ENCODE measurements at regions of chr6 and their contacts with region 1.

Region 1: DNA sequence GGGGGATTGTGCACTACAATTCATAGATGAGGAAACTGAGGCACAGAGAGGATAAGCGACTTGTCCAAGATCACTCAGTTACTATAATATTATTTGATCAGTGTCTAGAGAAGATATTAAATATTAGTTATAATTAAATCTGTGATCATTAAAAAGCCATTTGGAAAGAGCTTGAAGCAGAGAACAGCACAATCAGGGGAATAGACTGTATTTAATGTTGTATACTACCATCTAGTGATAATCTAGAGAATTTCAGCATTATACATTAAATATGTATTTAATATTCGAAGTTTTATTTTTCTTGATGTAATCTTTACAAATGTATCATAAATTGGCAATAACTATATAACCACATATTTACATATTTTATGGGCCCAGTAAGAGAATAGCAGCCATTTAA is 20.1 kb upstream of the MTCL3 start:
- DNase-seq: peak; percentile 26
- H3K4me3 ChIP-seq: no peak overlapping the region
- H3K27ac ChIP-seq: no peak overlapping the region
- H3K4me1 ChIP-seq: no peaks in the 10 kb centered on the region
- H3K27me3 ChIP-seq: peaks cover 12 to 17% of the 10 kb centered on the region in 2 experiments
- CTCF ChIP-seq: peak in 1 of 2 donors; percentile 3
- POLR2A ChIP-seq: no peak

Region 2: GRCh38 chr6:127459231-127459641 is 80.0 kb before region 1 on chr6 and contains the start of gene KIAA0408:
- CTCF ChIA-PET with region 1: interaction called, 155 read pairs
- POLR2A ChIA-PET with region 1: no interaction called
- dilution Hi-C with region 1: no loop called
- intact Hi-C with region 1: no loop called
- DNase-seq: peak; percentile 23
- H3K4me3 ChIP-seq: no peak within 1 kb of the TSS
- H3K27ac ChIP-seq: no peak within 1 kb of the TSS
- H3K4me1 ChIP-seq: no peaks in the 10 kb centered on the region
- H3K27me3 ChIP-seq: peaks cover 0 to 5% of the 10 kb centered on the region in 2 experiments
- CTCF ChIP-seq: no peak
- POLR2A ChIP-seq: no peak
- total RNA-seq, gene KIAA0408: not detected in 2 replicates

Region 3: GRCh38 chr6:127464881-127465459 is 74.3 kb before region 1 on chr6:
- CTCF ChIA-PET with region 1: interaction called, 155 read pairs
- POLR2A ChIA-PET with region 1: no interaction called
- dilution Hi-C with region 1: no loop called
- intact Hi-C with region 1: loop called (anchors 1 kb)
- DNase-seq: peak; percentile 59
- H3K4me3 ChIP-seq: no peak overlapping the region
- H3K27ac ChIP-seq: no peak overlapping the region
- H3K4me1 ChIP-seq: no peaks in the 10 kb centered on the region
- H3K27me3 ChIP-seq: peaks cover 3 to 6% of the 10 kb centered on the region in 2 experiments
- CTCF ChIP-seq: peak; percentile 87 to 91
- POLR2A ChIP-seq: no peak

Region 4: DNA sequence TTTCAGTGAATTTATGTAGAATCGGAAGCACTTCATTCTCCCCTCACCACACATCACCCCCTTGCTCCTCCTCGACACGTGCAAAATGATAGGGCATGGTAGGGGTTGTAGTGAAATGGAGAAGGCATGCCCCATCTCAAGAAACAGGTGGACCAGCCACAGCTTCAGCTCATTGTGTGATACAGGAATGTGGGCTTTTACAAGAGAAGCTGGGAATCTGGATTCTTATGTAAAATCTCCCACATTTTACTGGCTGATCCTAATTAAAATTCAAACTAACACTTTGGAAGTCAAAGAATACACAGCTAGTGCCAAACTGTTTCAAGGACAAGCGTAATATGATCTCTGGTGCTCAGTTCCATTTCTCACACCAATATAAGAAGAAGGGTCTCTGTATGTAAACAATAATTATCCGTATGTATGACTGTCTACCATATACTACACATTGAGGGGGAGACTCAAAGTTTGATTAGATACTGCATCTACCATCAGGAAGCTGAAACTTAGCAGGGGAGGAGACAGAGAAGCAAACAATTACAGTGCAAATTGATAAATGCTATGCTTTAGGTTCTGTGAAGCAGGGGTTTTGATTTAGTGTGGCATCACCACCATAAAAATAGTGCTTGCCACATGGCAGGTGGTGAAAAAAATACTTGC is 55.7 kb before region 1 on chr6:
- CTCF ChIA-PET with region 1: interaction called, 11 read pairs
- POLR2A ChIA-PET with region 1: no interaction called
- dilution Hi-C with region 1: no loop called
- intact Hi-C with region 1: no loop called
- DNase-seq: no peak
- H3K4me3 ChIP-seq: no peak overlapping the region
- H3K27ac ChIP-seq: no peak overlapping the region
- H3K4me1 ChIP-seq: peaks cover 4% of the 10 kb centered on the region
- H3K27me3 ChIP-seq: peaks cover 8 to 17% of the 10 kb centered on the region in 2 experiments
- CTCF ChIP-seq: no peak
- POLR2A ChIP-seq: no peak